ENCODE measurements at regions of chr12 and their contacts with region 1.

Region 1: DNA sequence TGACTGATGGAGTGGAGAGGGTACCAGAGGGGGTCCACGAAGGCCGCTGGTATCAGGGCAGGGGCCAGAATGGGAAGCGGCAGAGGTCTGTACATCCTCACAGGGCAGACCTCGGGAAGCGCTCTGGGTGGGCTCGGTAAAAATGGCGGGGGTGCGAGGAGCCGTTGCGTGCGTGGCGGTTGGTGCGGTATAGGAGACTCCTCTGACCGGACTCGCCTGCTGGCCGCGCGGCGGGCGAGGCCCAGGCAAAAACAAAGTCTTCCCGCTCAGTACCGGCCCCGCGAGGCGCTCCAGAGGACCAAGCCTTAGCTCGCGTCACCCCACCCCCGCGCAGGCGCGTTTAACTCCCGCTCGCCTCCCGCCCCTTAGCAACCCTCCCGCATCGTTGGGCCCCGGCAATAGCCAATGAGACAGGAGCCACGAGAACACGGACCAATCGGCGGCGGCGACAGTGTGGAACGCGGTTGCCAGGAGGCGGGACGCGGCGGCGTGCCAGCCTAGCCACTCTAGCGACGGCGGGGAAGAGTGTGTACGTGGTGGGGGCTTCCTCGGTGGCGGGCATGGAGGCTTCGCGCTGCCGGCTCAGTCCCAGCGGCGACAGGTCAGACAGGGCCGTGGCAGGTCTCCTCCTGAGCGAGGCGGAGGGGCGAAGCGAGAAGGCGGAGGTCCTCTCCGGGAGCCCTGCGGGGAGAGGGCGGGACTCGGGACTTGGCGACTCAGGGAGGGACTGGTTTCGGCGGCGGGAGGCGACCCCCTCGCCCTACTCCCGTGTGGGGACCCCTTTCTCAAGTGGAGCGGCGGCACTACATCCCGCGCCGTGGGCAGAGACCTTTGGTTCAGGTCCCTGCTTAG is at the start of gene TULP3:
- DNase-seq: peak; percentile 97
- H3K4me3 Mint-ChIP-seq: peak within 1 kb of the TSS; percentile 91
- H3K27ac Mint-ChIP-seq: peak within 1 kb of the TSS; percentile 88
- H3K4me1 Mint-ChIP-seq: peaks cover 27% of the 10 kb centered on the region
- H3K27me3 Mint-ChIP-seq: no peaks in the 10 kb centered on the region
- total RNA-seq, gene TULP3: 7.9 and 8.6 TPM in 2 replicates

Region 2: GRCh38 chr12:2794736-2795289 is 95.8 kb before region 1 on chr12 and contains the start of gene FKBP4:
- intact Hi-C with region 1: loop called (anchors 1 kb)
- DNase-seq: peak; percentile 86
- H3K4me3 Mint-ChIP-seq: peak within 1 kb of the TSS; percentile 96
- H3K27ac Mint-ChIP-seq: peak within 1 kb of the TSS; percentile 75
- H3K4me1 Mint-ChIP-seq: peaks cover 15% of the 10 kb centered on the region
- H3K27me3 Mint-ChIP-seq: peaks cover 20% of the 10 kb centered on the region
- total RNA-seq, gene FKBP4: 247 and 269 TPM in 2 replicates

Region 3: DNA sequence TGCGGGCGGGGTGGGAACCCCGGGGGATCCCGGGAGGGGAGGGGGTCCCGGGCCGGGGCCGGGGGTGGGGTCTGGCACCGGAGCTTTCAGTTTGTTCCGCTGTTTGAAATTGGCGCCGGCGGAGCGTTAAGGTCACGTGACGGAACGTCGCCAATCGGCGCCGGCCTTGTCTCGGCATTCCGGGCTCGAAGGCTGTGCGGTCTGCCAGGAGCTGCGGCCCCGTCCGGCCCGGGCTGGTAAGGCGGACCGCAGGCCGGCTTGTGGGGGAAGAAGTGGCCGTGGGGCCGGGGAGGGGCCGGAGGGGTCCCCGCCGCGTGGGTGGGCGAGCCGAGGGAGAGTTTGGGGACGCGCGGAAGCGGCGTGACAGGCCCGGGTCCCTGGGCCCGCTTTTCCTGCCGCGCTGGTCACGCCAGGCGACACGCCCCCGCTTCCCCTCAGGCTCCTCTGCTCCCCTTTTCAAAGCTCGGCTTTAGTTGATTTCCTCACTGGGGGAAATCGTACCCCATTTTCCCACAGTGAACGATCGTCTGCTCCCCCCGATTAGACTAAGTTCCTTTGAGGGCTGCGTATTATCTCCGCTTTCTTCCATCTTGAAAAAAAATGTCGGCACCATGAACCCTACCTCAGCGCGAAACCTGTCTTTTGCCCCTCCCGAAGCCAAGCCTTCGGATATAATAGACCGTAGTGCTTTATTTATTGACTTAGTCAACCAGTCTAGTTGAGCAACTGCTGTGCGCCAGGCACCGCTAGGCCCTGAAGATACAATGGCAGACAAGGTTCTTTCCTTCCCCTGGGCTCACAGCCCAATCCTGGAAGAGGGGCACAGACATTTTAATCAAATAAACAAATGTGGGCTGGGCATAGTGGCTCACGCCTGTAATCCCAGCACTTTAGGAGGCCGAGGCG is 13.3 kb before region 1 on chr12 and contains the starts of genes FOXM1 and RHNO1:
- intact Hi-C with region 1: loop called (anchors 1 kb)
- DNase-seq: peak; percentile 86
- H3K4me3 Mint-ChIP-seq: peak within 1 kb of the TSS; percentile 99
- H3K27ac Mint-ChIP-seq: peak within 1 kb of the TSS; percentile 100
- H3K4me1 Mint-ChIP-seq: peaks cover 51% of the 10 kb centered on the region
- H3K27me3 Mint-ChIP-seq: no peaks in the 10 kb centered on the region
- total RNA-seq, gene FOXM1: 72.6 and 75.9 TPM in 2 replicates
- total RNA-seq, gene RHNO1: 43.3 and 48.1 TPM in 2 replicates

Region 4: DNA sequence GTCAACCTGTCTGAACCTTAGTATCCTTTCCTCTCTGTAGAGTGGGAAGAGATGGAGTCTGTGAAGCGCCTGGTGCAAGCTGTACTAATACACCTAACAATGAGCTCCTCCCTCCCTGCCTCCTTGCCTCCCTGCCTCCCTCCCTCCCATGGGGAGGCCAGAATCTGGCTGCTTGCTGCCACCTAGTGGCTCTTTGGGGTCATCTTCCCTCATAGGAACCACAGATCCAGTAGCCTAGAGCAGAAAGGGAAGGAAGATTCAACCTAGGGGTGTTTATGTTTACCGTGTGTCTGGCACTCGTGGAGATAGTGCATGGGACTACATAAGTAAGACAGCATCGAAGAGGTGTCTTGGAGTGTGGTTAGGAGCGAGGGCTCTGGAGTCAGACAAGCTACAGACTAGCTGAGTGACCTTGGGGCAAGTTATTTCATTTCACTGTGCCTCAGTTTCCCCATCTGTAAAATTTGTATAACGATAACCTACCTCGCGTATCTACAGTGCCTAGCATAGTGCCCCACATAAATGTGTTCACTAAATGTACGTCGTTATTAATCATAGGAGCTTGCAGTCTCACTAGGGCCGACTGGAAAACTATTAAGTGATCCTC is 151.0 kb after region 1 on chr12:
- intact Hi-C with region 1: loop called (anchors 1 kb)
- DNase-seq: peak; percentile 46
- H3K4me3 Mint-ChIP-seq: no peak overlapping the region
- H3K27ac Mint-ChIP-seq: no peak overlapping the region
- H3K4me1 Mint-ChIP-seq: no peaks in the 10 kb centered on the region
- H3K27me3 Mint-ChIP-seq: peaks cover 7% of the 10 kb centered on the region